CD4-positive, alpha-beta T cell (primary cell): ENCODE measurements at regions of chr10 and their contacts with region 1.

Region 1: DNA sequence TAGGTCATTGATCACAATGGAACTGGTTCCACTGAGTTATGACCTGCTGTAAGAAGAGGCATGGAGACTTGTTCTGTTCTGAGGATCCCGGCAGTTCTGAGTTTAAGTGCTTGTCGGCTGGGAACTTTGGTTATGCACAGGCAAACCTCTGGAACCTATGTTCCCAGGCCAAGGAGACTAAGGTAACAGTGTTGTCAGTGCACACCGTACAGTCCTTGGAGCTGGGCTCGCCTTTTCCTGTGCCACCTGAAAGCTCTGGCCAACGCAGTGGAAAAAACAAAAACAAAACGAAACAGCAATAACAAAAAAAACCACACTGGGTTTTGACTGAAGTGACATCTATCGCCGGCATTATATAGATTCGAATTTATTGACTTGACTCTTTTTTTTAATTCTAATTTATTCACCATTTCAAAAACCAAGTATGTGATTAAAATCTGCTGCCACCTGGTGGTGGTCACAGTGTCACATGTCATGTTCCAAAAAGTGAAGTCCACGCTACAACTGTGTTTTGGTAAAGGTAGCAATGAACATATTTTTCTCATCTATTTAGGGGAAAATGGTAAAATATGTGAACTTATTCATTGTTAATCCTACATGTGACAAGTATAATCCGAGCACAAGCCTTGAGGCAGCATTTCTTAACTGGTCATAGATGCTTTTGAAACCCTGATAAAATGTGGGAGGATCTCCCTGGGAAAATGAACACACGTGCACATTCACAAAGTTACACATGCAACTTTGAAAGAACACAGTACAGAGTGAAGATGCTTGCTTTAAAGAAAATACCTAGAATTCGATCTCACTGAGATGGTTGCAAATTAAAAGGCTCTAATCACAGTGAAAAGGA is 113.8 kb upstream of the PPP2R2D start:
- DNase-seq: peak in 10 of 14 experiments; percentile 8 to 59 (median 18)
- ATAC-seq: no peak
- H3K4me3 ChIP-seq: no peak overlapping the region
- H3K4me3 Mint-ChIP-seq: no peak overlapping the region
- H3K27ac ChIP-seq: no peak overlapping the region
- H3K27ac Mint-ChIP-seq: no peak overlapping the region
- H3K4me1 ChIP-seq: no peaks in the 10 kb centered on the region
- H3K4me1 Mint-ChIP-seq: no peaks in the 10 kb centered on the region
- H3K27me3 ChIP-seq: peaks cover 0 to 2% of the 10 kb centered on the region in 2 experiments
- H3K27me3 Mint-ChIP-seq: peaks cover 21% of the 10 kb centered on the region
- CTCF ChIP-seq: peak; percentile 68

Region 2: GRCh38 chr10:131162866-131163843 is 623.8 kb before region 1 on chr10:
- CTCF ChIA-PET with region 1: no interaction called
- POLR2A ChIA-PET with region 1: no interaction called
- intact Hi-C with region 1: loop called in 1 of 2 experiments (anchors 10 kb)
- DNase-seq: peak in 1 of 14 experiments; percentile 13
- ATAC-seq: peak; percentile 64
- H3K4me3 ChIP-seq: no peak overlapping the region
- H3K4me3 Mint-ChIP-seq: no peak overlapping the region
- H3K27ac ChIP-seq: no peak overlapping the region
- H3K27ac Mint-ChIP-seq: peak overlapping the region; percentile 82
- H3K4me1 ChIP-seq: peaks cover 3% of the 10 kb centered on the region
- H3K4me1 Mint-ChIP-seq: peaks cover 9% of the 10 kb centered on the region
- H3K27me3 ChIP-seq: no peaks in the 10 kb centered on the region
- H3K27me3 Mint-ChIP-seq: no peaks in the 10 kb centered on the region
- CTCF ChIP-seq: no peak

Region 3: DNA sequence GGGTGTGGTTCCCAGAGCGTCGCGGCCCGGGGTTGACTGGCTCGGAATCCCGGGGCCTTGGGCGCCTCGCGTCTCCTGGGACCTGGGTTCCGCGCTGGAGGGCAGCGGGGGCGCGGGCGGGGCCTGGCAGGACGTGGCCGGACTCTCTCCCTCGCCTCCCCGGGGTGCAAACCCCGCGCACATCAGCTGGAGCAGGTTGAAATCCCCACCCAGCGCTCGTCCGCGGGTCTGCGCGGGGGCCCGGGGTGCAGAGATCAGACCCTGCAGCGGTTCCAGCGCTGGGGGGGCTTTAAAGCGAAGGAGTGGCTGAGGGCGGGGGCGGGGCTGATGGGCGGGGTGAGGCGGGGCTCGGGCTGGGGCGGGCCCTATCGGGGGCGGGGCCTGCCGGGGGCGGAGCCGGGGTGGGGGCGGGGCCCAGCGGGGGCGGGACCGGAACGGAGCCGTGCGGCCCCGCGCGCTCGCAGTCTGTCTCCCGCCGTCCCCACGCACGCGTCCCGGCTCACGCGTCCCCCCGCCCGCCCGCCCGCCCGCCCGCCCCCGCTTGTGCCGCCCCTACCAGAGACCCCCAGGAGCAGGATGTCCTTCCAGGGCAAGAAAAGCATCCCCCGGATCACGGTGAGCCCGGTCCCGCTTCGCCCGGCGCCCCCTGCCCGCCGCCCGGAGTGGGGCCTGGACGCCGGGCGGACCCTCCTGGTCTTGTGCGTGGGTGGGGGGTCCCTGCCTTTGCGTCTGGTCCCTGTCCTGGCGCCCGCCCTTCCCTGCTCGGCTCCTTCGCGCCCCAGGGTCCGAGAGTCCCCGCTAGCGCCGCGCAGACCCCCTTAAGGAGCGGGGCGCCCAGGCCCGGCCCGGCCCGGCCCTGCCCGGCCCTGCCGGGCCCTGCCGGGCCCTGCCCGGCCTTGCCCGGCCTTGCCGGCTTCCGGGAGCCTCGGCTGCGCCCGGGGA is 399.8 kb after region 1 on chr10 and contains the start of gene DPYSL4:
- CTCF ChIA-PET with region 1: no interaction called
- POLR2A ChIA-PET with region 1: no interaction called
- intact Hi-C with region 1: no loop called
- DNase-seq: peak in 12 of 14 experiments; percentile 8 to 75 (median 22)
- ATAC-seq: peak; percentile 58
- H3K4me3 ChIP-seq: peak within 1 kb of the TSS; percentile 49
- H3K4me3 Mint-ChIP-seq: no peak within 1 kb of the TSS
- H3K27ac ChIP-seq: no peak within 1 kb of the TSS
- H3K27ac Mint-ChIP-seq: no peak within 1 kb of the TSS
- H3K4me1 ChIP-seq: peaks cover 24% of the 10 kb centered on the region
- H3K4me1 Mint-ChIP-seq: peaks cover 6% of the 10 kb centered on the region
- H3K27me3 ChIP-seq: peaks cover 18 to 21% of the 10 kb centered on the region in 2 experiments
- H3K27me3 Mint-ChIP-seq: peaks cover 56% of the 10 kb centered on the region
- CTCF ChIP-seq: no peak
- total RNA-seq, gene DPYSL4: 0.64 to 0.96 TPM